GM10248 (cell line): ENCODE measurements at regions of chr1 and their contacts with region 1.

Region 1: DNA sequence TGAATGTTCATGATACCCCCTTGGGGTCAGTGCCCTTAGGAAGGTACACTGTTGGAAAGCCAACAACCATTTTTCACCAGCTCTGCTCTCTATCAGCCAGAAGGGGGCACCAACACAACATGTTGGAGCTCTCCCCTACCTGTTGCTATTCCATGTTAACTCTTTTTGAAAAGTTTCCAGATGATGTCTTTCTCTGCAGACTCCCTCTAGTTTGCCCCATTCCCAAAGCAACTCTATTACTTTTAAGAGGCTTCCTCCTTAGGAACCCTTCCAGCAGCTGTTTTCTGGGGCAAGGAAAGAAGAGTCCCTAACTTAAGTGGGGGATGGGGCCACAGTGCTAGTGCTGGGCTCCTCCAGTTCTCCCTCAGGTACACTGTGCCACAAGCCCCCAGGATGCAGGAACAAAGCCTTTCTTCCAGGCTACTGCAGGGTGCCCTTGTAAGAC is 22.9 kb upstream of the NDC1 start:
- DNase-seq: peak; percentile 58
- CTCF ChIP-seq: peak; percentile 83

Region 2: GRCh38 chr1:53837924-53838652 is 22.9 kb before region 1 on chr1 and contains the start of gene NDC1:
- CTCF ChIA-PET with region 1: interaction called, 16 read pairs
- POLR2A ChIA-PET with region 1: no interaction called
- DNase-seq: peak; percentile 88
- CTCF ChIP-seq: no peak

Region 3: DNA sequence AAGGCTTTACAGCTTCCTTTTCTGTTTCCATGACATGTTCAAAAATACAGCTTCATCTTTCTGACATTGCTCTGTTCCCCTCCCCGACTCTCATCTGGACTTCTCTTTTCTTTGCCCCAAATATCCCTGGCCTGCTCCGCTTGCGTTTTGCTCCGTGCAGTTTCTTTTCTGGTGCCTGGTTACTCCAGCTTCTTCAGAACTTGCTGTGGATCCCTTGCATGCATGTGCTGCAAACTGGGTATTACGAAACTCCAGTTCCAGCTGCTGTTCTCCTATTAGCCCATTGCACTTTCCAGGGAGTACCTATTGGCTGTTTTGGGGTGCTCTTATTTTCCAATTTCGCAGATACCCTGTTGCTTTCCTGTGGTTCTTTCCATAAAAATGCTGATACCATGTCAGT is 13.0 kb before region 1 on chr1:
- CTCF ChIA-PET with region 1: interaction called, 86 read pairs
- POLR2A ChIA-PET with region 1: no interaction called
- DNase-seq: no peak
- CTCF ChIP-seq: no peak

Region 4: GRCh38 chr1:53878492-53879105 is 17.6 kb after region 1 on chr1:
- CTCF ChIA-PET with region 1: interaction called, 135 read pairs
- POLR2A ChIA-PET with region 1: no interaction called
- DNase-seq: peak; percentile 43
- CTCF ChIP-seq: peak; percentile 47

Region 5: GRCh38 chr1:53889304-53890298 is 28.6 kb after region 1 on chr1 and contains the start of gene YIPF1:
- CTCF ChIA-PET with region 1: interaction called, 12 read pairs
- POLR2A ChIA-PET with region 1: no interaction called
- DNase-seq: peak; percentile 93
- CTCF ChIP-seq: no peak

Region 6: GRCh38 chr1:53945433-53946251 is 84.7 kb after region 1 on chr1 and contains the start of gene IFT25:
- CTCF ChIA-PET with region 1: interaction called, 85 read pairs
- POLR2A ChIA-PET with region 1: no interaction called
- DNase-seq: peak; percentile 95
- CTCF ChIP-seq: no peak

Region 7: GRCh38 chr1:54081306-54082270 is 220.6 kb after region 1 on chr1:
- CTCF ChIA-PET with region 1: interaction called, 18 read pairs
- POLR2A ChIA-PET with region 1: no interaction called
- DNase-seq: peak; percentile 66
- CTCF ChIP-seq: peak; percentile 65